Right ventricle myocardium inferior (tissue), 1 donor: ENCODE measurements at regions of chr19 and their contacts with region 1.

Region 1: DNA sequence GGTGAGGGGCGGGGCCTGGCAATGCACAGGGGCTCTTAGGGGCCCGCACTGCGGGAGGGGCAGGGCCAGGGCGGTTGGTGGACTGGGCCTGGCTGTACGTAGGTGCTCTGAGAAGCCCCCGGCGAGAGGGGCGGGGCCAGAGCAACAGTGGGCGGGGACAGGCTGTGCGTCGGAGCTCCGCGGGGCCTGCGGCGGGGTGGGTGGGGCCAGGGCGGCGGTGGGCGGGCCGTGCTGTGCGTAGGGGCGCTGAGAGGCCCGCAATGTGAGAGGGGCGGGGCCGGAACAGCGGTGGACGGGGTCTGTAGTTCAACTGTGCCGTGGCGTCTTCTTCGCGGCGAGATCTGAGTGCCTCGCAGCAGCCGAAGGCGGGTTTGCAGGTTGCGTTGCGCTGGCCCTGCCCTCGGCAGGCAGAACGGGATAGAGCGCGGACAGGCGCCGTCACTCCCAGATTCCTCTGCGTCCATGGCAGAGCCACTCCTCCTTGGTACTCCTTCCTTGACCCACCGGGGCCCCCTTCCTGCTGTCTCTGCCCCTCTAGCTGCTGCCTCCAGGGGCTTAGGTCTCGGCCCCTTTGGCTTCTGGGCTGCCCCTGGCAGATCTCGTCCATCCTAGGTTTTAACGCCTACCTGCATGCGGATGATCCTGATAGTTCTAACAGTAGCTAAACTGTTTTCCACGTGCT is 33.2 kb downstream of the CCNE1 start:
- DNase-seq: peak; percentile 95
- ATAC-seq: peak; percentile 95

Region 2: DNA sequence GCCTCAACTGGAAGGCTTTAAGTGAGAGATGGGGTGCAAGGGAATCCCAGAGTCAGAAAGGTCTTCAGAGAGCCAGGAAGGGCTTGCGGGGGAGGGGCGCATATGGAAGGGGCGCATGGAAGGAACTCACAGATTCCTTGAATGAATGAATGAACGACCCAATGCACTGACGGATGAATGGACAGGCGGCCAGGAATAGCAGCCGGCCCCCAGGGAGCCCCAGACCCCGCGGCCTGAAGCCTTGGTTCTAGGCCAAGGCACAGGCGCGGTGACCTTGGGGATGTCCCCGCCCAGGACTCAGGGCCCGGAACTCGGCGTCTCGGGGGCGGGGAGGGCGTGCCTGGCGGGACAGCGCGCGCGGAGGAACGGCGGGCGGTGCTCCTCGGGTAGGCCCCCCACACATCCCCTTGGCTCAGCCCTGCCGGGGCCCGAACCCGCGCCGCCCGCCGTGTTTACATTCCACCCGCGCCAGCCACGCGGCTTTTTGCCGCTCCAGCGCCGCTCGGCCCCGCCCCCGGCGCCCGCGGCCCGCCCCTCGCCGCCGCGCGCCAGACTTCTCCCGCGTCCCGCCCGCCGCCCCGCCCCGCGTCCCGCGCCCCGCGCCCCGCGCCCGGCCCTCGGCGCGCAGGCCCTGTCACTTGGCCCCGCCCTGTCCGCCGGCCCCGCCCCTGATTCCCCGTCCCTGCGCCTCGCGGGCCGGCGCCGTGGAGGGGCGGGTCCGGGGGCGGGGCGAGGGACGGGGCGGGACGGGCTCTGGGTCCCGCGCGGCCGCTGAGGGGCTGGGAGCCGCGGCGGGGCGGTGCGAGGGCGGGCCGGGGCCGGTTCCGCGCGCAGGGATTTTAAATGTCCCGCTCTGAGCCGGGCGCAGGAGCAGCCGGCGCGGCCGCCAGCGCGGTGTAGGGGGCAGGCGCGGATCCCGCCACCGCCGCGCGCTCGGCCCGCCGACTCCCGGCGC is 33.6 kb before region 1 on chr19 and contains the start of gene CCNE1:
- intact Hi-C with region 1: loop called (anchors 1 kb)
- DNase-seq: peak; percentile 97
- ATAC-seq: peak; percentile 99
- total RNA-seq, gene CCNE1: 3.1 TPM